CD4-positive, alpha-beta T cell (primary cell): ENCODE measurements at regions of chr3 and their contacts with region 1.

Region 1: GRCh38 chr3:31544634-31545033 is 11.9 kb downstream of the STT3B start:
- DNase-seq: no peak
- ATAC-seq: no peak
- H3K4me3 ChIP-seq: no peak overlapping the region
- H3K4me3 Mint-ChIP-seq: peak overlapping the region; percentile 23
- H3K27ac ChIP-seq: no peak overlapping the region
- H3K27ac Mint-ChIP-seq: peak overlapping the region; percentile 55
- H3K4me1 ChIP-seq: peaks cover 21% of the 10 kb centered on the region
- H3K4me1 Mint-ChIP-seq: peaks cover 95% of the 10 kb centered on the region
- H3K27me3 ChIP-seq: no peaks in the 10 kb centered on the region
- H3K27me3 Mint-ChIP-seq: no peaks in the 10 kb centered on the region
- CTCF ChIP-seq: no peak

Region 2: GRCh38 chr3:31462050-31462569 is 82.5 kb before region 1 on chr3:
- CTCF ChIA-PET with region 1: interaction called, 3 read pairs
- POLR2A ChIA-PET with region 1: interaction called, 3 read pairs
- intact Hi-C with region 1: loop called in 1 of 2 experiments (anchors 2 kb)
- DNase-seq: peak in 13 of 14 experiments; percentile 9 to 89 (median 40)
- ATAC-seq: peak; percentile 85
- H3K4me3 ChIP-seq: peak overlapping the region; percentile 30
- H3K4me3 Mint-ChIP-seq: peak overlapping the region; percentile 72
- H3K27ac ChIP-seq: peak overlapping the region; percentile 54 to 74
- H3K27ac Mint-ChIP-seq: peak overlapping the region; percentile 90
- H3K4me1 ChIP-seq: peaks cover 54% of the 10 kb centered on the region
- H3K4me1 Mint-ChIP-seq: peaks cover 74% of the 10 kb centered on the region
- H3K27me3 ChIP-seq: no peaks in the 10 kb centered on the region
- H3K27me3 Mint-ChIP-seq: no peaks in the 10 kb centered on the region
- CTCF ChIP-seq: peak; percentile 42

Region 3: GRCh38 chr3:31505371-31506048 is 39.1 kb before region 1 on chr3:
- CTCF ChIA-PET with region 1: no interaction called
- POLR2A ChIA-PET with region 1: no interaction called
- intact Hi-C with region 1: no loop called
- DNase-seq: peak in 2 of 14 experiments; percentile 6 to 22
- ATAC-seq: no peak
- H3K4me3 ChIP-seq: no peak overlapping the region
- H3K4me3 Mint-ChIP-seq: no peak overlapping the region
- H3K27ac ChIP-seq: no peak overlapping the region
- H3K27ac Mint-ChIP-seq: no peak overlapping the region
- H3K4me1 ChIP-seq: peaks cover 28% of the 10 kb centered on the region
- H3K4me1 Mint-ChIP-seq: peaks cover 54% of the 10 kb centered on the region
- H3K27me3 ChIP-seq: no peaks in the 10 kb centered on the region
- H3K27me3 Mint-ChIP-seq: no peaks in the 10 kb centered on the region
- CTCF ChIP-seq: no peak

Region 4: GRCh38 chr3:31567036-31567435 is 22.4 kb after region 1 on chr3:
- CTCF ChIA-PET with region 1: interaction called, 3 read pairs
- POLR2A ChIA-PET with region 1: interaction called, 3 read pairs
- intact Hi-C with region 1: loop called (anchors 1 to 5 kb)
- DNase-seq: peak in 5 of 14 experiments; percentile 8 to 66 (median 45)
- ATAC-seq: peak; percentile 78
- H3K4me3 ChIP-seq: no peak overlapping the region
- H3K4me3 Mint-ChIP-seq: peak overlapping the region; percentile 68
- H3K27ac ChIP-seq: no peak overlapping the region
- H3K27ac Mint-ChIP-seq: peak overlapping the region; percentile 53
- H3K4me1 ChIP-seq: peaks cover 27% of the 10 kb centered on the region
- H3K4me1 Mint-ChIP-seq: peaks cover 93% of the 10 kb centered on the region
- H3K27me3 ChIP-seq: no peaks in the 10 kb centered on the region
- H3K27me3 Mint-ChIP-seq: no peaks in the 10 kb centered on the region
- CTCF ChIP-seq: peak; percentile 74

Region 5: GRCh38 chr3:31762097-31762764 is 217.6 kb after region 1 on chr3:
- CTCF ChIA-PET with region 1: no interaction called
- POLR2A ChIA-PET with region 1: no interaction called
- intact Hi-C with region 1: loop called in 1 of 2 experiments (anchors 5 kb)
- DNase-seq: no peak
- ATAC-seq: no peak
- H3K4me3 ChIP-seq: no peak overlapping the region
- H3K4me3 Mint-ChIP-seq: no peak overlapping the region
- H3K27ac ChIP-seq: no peak overlapping the region
- H3K27ac Mint-ChIP-seq: no peak overlapping the region
- H3K4me1 ChIP-seq: no peaks in the 10 kb centered on the region
- H3K4me1 Mint-ChIP-seq: no peaks in the 10 kb centered on the region
- H3K27me3 ChIP-seq: no peaks in the 10 kb centered on the region
- H3K27me3 Mint-ChIP-seq: no peaks in the 10 kb centered on the region
- CTCF ChIP-seq: no peak